Activated T-helper 2 cell treated with anti-CD3 and anti-CD28 coated beads, Interferon-gamma antibody, Interleukin-2, Interleukin-4, amounts not matched to agents 10 μg/mL and 5 μg/mL and 100 μg/mL, durations not matched to agents 14 hours and 24 hours and 36 hours (primary cell): ENCODE measurements at regions of chr9 and their contacts with region 1.

Region 1: GRCh38 chr9:128881901-128882681 is at the starts of genes KYAT1 and LRRC8A:
- DNase-seq: peak; percentile 99
- H3K4me3 Mint-ChIP-seq: peak within 1 kb of the TSS; percentile 97
- H3K27ac Mint-ChIP-seq: peak within 1 kb of the TSS; percentile 92
- H3K4me1 Mint-ChIP-seq: peaks cover 39% of the 10 kb centered on the region
- H3K27me3 Mint-ChIP-seq: no peaks in the 10 kb centered on the region
- total RNA-seq, gene KYAT1: 13.6 and 14.0 TPM in 2 replicates
- total RNA-seq, gene LRRC8A: 24.9 and 25.4 TPM in 2 replicates

Region 2: GRCh38 chr9:128182893-128183588 is 699.0 kb before region 1 on chr9:
- intact Hi-C with region 1: no loop called
- DNase-seq: no peak
- H3K4me3 Mint-ChIP-seq: no peak overlapping the region
- H3K27ac Mint-ChIP-seq: no peak overlapping the region
- H3K4me1 Mint-ChIP-seq: peaks cover 18% of the 10 kb centered on the region
- H3K27me3 Mint-ChIP-seq: no peaks in the 10 kb centered on the region

Region 3: GRCh38 chr9:128688512-128689292 is 193.4 kb before region 1 on chr9 and contains the start of gene SET:
- intact Hi-C with region 1: loop called (anchors 5 kb)
- DNase-seq: peak; percentile 92
- H3K4me3 Mint-ChIP-seq: peak within 1 kb of the TSS; percentile 82
- H3K27ac Mint-ChIP-seq: peak within 1 kb of the TSS; percentile 91
- H3K4me1 Mint-ChIP-seq: peaks cover 47% of the 10 kb centered on the region
- H3K27me3 Mint-ChIP-seq: no peaks in the 10 kb centered on the region
- total RNA-seq, gene SET: 749 and 756 TPM in 2 replicates

Region 4: GRCh38 chr9:128863647-128864046 is 18.4 kb before region 1 on chr9:
- intact Hi-C with region 1: loop called (anchors 2 kb)
- DNase-seq: peak; percentile 77
- H3K4me3 Mint-ChIP-seq: no peak overlapping the region
- H3K27ac Mint-ChIP-seq: peak overlapping the region; percentile 38
- H3K4me1 Mint-ChIP-seq: peaks cover 4% of the 10 kb centered on the region
- H3K27me3 Mint-ChIP-seq: no peaks in the 10 kb centered on the region

Region 5: GRCh38 chr9:128892317-128892921 is 10.3 kb after region 1 on chr9:
- intact Hi-C with region 1: no loop called
- DNase-seq: no peak
- H3K4me3 Mint-ChIP-seq: no peak overlapping the region
- H3K27ac Mint-ChIP-seq: no peak overlapping the region
- H3K4me1 Mint-ChIP-seq: peaks cover 27% of the 10 kb centered on the region
- H3K27me3 Mint-ChIP-seq: no peaks in the 10 kb centered on the region

Region 6: GRCh38 chr9:128919402-128920089 is 37.5 kb after region 1 on chr9:
- intact Hi-C with region 1: loop called (anchors 1 kb)
- DNase-seq: no peak
- H3K4me3 Mint-ChIP-seq: no peak overlapping the region
- H3K27ac Mint-ChIP-seq: no peak overlapping the region
- H3K4me1 Mint-ChIP-seq: peaks cover 4% of the 10 kb centered on the region
- H3K27me3 Mint-ChIP-seq: no peaks in the 10 kb centered on the region

Region 7: GRCh38 chr9:129036241-129036922 is 154.3 kb after region 1 on chr9 and contains the start of gene MIGA2:
- intact Hi-C with region 1: loop called (anchors 1 kb)
- DNase-seq: peak; percentile 94
- H3K4me3 Mint-ChIP-seq: peak within 1 kb of the TSS; percentile 94
- H3K27ac Mint-ChIP-seq: peak within 1 kb of the TSS; percentile 54
- H3K4me1 Mint-ChIP-seq: peaks cover 22% of the 10 kb centered on the region
- H3K27me3 Mint-ChIP-seq: no peaks in the 10 kb centered on the region
- total RNA-seq, gene MIGA2: 41.5 and 41.7 TPM in 2 replicates